A549 (cell line): ENCODE measurements at regions of chr17 and their contacts with region 1.

Region 1: GRCh38 chr17:81440876-81441244 is 45.6 kb downstream of the BAHCC1 start:
- DNase-seq: peak; percentile 63 to 87
- ATAC-seq: peak; percentile 49 to 83; a peak in 5 of 6 replicates
- H3K4me3 ChIP-seq: no peak overlapping the region
- H3K27ac ChIP-seq: 0 out of 6 replicates have a peak overlapping the region, but pooled peaks of 1 of the 2 experiments have one; percentile 20
- H3K4me1 ChIP-seq: 0 out of 3 replicates have a peak, but pooled peaks cover 4% of the 10 kb centered on the region
- CTCF ChIP-seq: peak; percentile 60
- EP300 ChIP-seq: no peak
- POLR2A ChIP-seq: no peak
- RAD21 ChIP-seq: peak; percentile 56 to 69; a peak in 4 of 5 replicates

Region 2: GRCh38 chr17:81309070-81309905 is 131.6 kb before region 1 on chr17:
- CTCF ChIA-PET with region 1: interaction called, 10 read pairs
- POLR2A ChIA-PET with region 1: no interaction called
- DNase-seq: peak; percentile 90 to 99
- ATAC-seq: peak; percentile 74 to 88
- H3K4me3 ChIP-seq: peak overlapping the region; percentile 48
- H3K27ac ChIP-seq: peak overlapping the region; percentile 82 to 91
- H3K4me1 ChIP-seq: peaks cover 35% of the 10 kb centered on the region
- CTCF ChIP-seq: peak; percentile 50
- EP300 ChIP-seq: no peak
- POLR2A ChIP-seq: peak; percentile 50
- RAD21 ChIP-seq: peak; percentile 52 to 69

Region 3: GRCh38 chr17:81394921-81395599 is 45.8 kb before region 1 on chr17 and contains the start of gene BAHCC1:
- CTCF ChIA-PET with region 1: interaction called, 23 read pairs
- POLR2A ChIA-PET with region 1: interaction called, 5 read pairs
- DNase-seq: peak; percentile 99 to 100
- ATAC-seq: peak; percentile 65 to 85
- H3K4me3 ChIP-seq: peak within 1 kb of the TSS; percentile 76
- H3K27ac ChIP-seq: peak within 1 kb of the TSS; percentile 94 to 98
- H3K4me1 ChIP-seq: peaks cover 40% of the 10 kb centered on the region
- CTCF ChIP-seq: no peak
- EP300 ChIP-seq: no peak
- POLR2A ChIP-seq: peak; percentile 79
- RAD21 ChIP-seq: no peak
- polyA plus RNA-seq, gene BAHCC1: 2.1 and 2.6 TPM in 2 replicates

Region 4: GRCh38 chr17:81412490-81413093 is 28.3 kb before region 1 on chr17:
- CTCF ChIA-PET with region 1: interaction called, 23 read pairs
- POLR2A ChIA-PET with region 1: no interaction called
- DNase-seq: no peak
- ATAC-seq: no peak
- H3K4me3 ChIP-seq: no peak overlapping the region
- H3K27ac ChIP-seq: peak overlapping the region in 1 of 2 experiments; percentile 45; a peak in 3 of 6 replicates
- H3K4me1 ChIP-seq: peaks cover 24% of the 10 kb centered on the region
- CTCF ChIP-seq: no peak
- EP300 ChIP-seq: no peak
- POLR2A ChIP-seq: no peak
- RAD21 ChIP-seq: no peak

Region 5: GRCh38 chr17:81453712-81454111 is 12.9 kb after region 1 on chr17:
- CTCF ChIA-PET with region 1: interaction called, 27 read pairs
- POLR2A ChIA-PET with region 1: interaction called, 3 read pairs
- DNase-seq: no peak
- ATAC-seq: no peak
- H3K4me3 ChIP-seq: no peak overlapping the region
- H3K27ac ChIP-seq: no peak overlapping the region
- H3K4me1 ChIP-seq: no peaks in the 10 kb centered on the region
- CTCF ChIP-seq: no peak
- EP300 ChIP-seq: no peak
- POLR2A ChIP-seq: no peak
- RAD21 ChIP-seq: no peak

Region 6: DNA sequence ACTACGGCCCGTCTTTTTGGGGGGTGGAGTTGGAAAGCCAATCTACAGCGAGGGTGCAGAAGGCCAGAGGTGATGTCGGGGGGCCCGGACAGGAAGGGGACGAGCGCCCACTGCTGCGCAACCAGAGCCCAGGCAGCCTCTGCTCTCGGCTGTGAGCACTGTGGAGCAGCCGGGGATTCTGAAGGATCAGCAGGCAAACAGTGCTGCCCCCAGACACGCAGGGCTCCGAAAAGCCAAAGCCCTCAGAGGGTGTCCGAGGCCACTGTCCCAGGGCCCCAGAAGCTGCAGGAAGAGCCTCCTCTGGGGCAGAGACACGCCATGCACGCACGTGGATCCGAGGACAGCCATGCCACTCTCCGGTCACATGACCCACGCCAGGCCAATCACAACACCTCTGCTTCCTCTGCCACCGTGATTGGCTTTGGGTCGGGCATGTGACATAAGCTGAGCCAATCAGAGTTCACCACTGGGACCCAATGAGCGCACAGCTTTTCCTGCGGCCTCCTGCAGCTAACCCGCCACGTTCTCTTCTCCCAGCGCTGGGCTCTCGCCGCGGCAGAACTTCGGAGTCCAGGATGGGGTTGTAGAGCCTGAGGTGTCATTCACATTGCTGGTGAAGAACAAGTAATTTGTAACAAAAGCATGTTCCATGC is 31.1 kb after region 1 on chr17:
- CTCF ChIA-PET with region 1: interaction called, 12 read pairs
- POLR2A ChIA-PET with region 1: no interaction called
- DNase-seq: peak; percentile 80 to 94
- ATAC-seq: peak in 1 of 2 experiments; percentile 71; a peak in 3 of 6 replicates
- H3K4me3 ChIP-seq: no peak overlapping the region
- H3K27ac ChIP-seq: no peak overlapping the region
- H3K4me1 ChIP-seq: no peaks in the 10 kb centered on the region
- CTCF ChIP-seq: no peak
- EP300 ChIP-seq: no peak
- POLR2A ChIP-seq: no peak
- RAD21 ChIP-seq: no peak

Region 7: GRCh38 chr17:81500047-81500446 is 59.2 kb after region 1 on chr17:
- CTCF ChIA-PET with region 1: no interaction called
- POLR2A ChIA-PET with region 1: no interaction called
- DNase-seq: peak in 1 of 2 experiments; percentile 57
- ATAC-seq: peak; percentile 11 to 47; a peak in 5 of 6 replicates
- H3K4me3 ChIP-seq: no peak overlapping the region
- H3K27ac ChIP-seq: peak overlapping the region; percentile 43 to 71; a peak in 5 of 6 replicates
- H3K4me1 ChIP-seq: peaks cover 14% of the 10 kb centered on the region
- CTCF ChIP-seq: no peak
- EP300 ChIP-seq: no peak
- POLR2A ChIP-seq: no peak
- RAD21 ChIP-seq: no peak